OCI-LY7 (cell line): ENCODE measurements at regions of chr6 and their contacts with region 1.

Region 1: GRCh38 chr6:41941280-41942066 is at the start of gene CCND3:
- DNase-seq: peak; percentile 95
- H3K4me3 ChIP-seq: peak within 1 kb of the TSS; percentile 93
- H3K27ac ChIP-seq: peak within 1 kb of the TSS; percentile 82
- H3K4me1 ChIP-seq: peaks cover 69% of the 10 kb centered on the region
- CTCF ChIP-seq: no peak
- total RNA-seq, gene CCND3: 229 and 319 TPM in 2 replicates

Region 2: DNA sequence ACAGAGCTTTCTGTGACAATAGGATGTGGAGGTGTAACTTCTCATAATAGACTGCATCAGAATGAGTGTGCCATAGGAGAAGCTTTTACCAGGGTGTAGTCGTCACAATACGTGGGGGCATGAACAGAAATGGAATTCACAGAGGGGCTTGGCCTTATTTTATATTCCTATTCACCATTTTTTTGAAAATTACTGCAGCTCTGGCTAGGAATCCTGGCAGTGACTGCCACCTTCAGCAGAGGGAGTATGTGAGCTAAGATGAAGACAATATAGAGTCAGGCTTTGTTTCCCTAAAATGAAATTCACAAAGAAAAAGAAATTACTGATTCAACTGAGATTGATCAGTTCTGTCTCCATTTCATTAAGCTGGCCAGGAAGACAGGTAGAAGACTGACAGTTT is 140.1 kb before region 1 on chr6:
- CTCF ChIA-PET with region 1: no interaction called
- POLR2A ChIA-PET with region 1: no interaction called
- intact Hi-C with region 1: no loop called
- DNase-seq: peak; percentile 35
- H3K4me3 ChIP-seq: no peak overlapping the region
- H3K27ac ChIP-seq: no peak overlapping the region
- H3K4me1 ChIP-seq: no peaks in the 10 kb centered on the region
- CTCF ChIP-seq: peak; percentile 80

Region 3: DNA sequence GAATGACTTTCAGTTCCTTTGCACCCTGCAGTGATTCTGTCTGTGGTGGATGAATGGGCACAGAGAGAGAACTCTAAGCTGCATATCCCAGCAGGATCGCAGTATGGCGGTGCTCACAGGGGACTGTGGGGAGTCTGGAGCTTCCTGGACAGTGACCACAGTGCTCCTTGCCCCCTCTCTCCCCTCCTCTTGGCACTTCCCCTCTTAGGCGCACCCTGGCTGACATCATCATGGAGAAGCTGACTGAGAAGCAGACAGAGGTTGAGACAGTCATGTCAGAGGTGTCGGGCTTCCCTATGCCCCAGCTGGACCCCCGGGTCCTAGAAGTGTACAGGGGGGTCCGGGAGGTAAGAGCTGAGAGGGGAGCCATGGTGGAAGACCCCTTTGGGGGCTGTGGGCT is 11.5 kb before region 1 on chr6:
- CTCF ChIA-PET with region 1: interaction called, 4 read pairs
- POLR2A ChIA-PET with region 1: interaction called, 19 read pairs
- intact Hi-C with region 1: no loop called
- DNase-seq: no peak
- H3K4me3 ChIP-seq: no peak overlapping the region
- H3K27ac ChIP-seq: no peak overlapping the region
- H3K4me1 ChIP-seq: peaks cover 15% of the 10 kb centered on the region
- CTCF ChIP-seq: no peak

Region 4: GRCh38 chr6:42009966-42010891 is 68.8 kb after region 1 on chr6:
- CTCF ChIA-PET with region 1: interaction called, 3 read pairs
- POLR2A ChIA-PET with region 1: interaction called, 6 read pairs
- intact Hi-C with region 1: loop called (anchors 1 kb)
- DNase-seq: peak; percentile 96
- H3K4me3 ChIP-seq: peak overlapping the region; percentile 57
- H3K27ac ChIP-seq: peak overlapping the region; percentile 97
- H3K4me1 ChIP-seq: peaks cover 91% of the 10 kb centered on the region
- CTCF ChIP-seq: peak; percentile 41; the same call in 1 of the 2 replicates

Region 5: DNA sequence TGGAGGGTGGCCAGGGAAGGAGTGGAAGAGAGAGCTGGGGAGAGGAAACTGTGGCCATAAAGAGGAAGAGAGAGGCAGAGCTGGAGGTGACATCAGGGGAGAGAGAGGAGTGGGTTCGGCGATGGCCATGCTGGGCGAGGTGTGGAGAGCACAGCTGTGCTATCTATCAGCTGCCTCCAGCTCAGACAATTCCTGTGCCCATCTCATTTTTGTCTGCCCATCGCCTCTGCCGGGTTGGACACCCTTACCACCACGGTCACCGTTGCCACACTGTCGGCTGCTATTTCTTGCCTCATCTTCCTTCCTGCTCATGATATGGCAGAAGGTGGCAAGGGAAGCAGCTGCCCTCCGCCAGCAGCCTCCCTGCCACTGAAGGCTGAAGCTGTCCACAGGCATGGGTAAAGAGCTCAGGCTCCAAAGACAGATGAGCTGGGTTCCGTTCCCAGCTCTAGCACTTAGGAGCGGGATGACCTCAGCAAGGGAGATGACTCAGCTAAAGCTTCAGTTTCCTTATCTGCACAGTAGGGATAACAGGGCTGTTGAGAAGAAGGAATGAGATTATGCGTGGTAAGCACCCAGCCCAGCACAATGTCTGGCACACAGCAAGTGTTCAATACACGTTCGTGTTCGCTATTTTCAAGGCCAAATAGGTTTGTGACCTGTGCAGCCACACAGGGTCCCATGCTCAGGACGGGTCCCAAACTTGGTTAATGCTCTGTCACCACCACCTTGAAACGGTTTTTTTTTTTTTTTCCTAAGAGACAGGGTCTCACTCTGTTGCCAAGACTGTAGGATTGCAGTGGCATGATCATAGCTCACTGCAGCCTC is 87.0 kb after region 1 on chr6:
- CTCF ChIA-PET with region 1: interaction called, 4 read pairs
- POLR2A ChIA-PET with region 1: interaction called, 15 read pairs
- intact Hi-C with region 1: no loop called
- DNase-seq: no peak
- H3K4me3 ChIP-seq: no peak overlapping the region
- H3K27ac ChIP-seq: peak overlapping the region; percentile 98
- H3K4me1 ChIP-seq: peaks cover 100% of the 10 kb centered on the region
- CTCF ChIP-seq: no peak